AG04449 (cell line): ENCODE measurements at regions of chr12 and their contacts with region 1.

Region 1: GRCh38 chr12:92827836-92828431 is 101.2 kb downstream of the EEA1 start:
- DNase-seq: no peak
- H3K4me3 ChIP-seq: no peak overlapping the region
- CTCF ChIP-seq: peak; percentile 59

Region 2: DNA sequence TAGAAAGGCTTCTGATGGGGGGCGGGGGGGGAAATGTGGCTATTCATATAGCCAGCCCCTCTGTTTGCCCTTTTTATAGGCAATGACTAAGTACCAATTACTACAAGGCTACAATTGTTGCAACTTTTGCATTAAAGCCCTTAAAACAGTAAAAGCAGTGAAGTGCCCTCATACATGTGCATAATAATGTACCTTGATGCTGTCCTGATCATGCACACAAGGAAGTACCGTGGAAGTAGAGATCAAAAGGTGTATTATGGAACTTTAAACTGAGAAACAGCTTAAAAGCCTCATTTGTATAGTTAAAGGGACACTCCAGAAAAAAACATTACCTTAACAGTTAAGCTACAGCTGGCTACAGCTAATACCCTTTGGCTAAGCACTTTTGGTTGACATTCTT is 13.3 kb before region 1 on chr12:
- CTCF ChIA-PET with region 1: interaction called, 15 read pairs
- POLR2A ChIA-PET with region 1: no interaction called
- DNase-seq: no peak
- H3K4me3 ChIP-seq: no peak overlapping the region
- CTCF ChIP-seq: no peak

Region 3: DNA sequence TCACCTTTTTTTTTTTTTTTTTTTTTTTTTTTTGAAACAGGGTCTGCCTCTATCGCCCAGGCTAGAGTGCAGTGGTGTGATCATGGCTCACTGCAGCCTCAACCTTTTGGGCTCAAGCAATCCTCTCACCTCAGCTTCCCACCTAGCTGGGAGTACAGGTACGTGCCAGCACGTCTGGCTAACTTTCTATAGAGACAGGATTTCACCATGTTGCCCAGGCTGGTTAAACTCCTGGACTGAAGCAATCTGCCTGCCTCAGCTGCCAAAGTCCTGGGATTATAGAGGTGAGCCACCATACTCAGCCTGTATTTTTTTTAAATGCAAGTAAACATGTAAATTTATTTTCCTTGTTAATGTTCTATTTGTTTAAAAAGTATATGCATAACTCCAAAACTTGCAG is 20.8 kb after region 1 on chr12:
- CTCF ChIA-PET with region 1: no interaction called
- POLR2A ChIA-PET with region 1: no interaction called
- DNase-seq: no peak
- H3K4me3 ChIP-seq: no peak overlapping the region
- CTCF ChIP-seq: no peak

Region 4: GRCh38 chr12:92928421-92928961 is 100.6 kb after region 1 on chr12:
- CTCF ChIA-PET with region 1: interaction called, 10 read pairs
- POLR2A ChIA-PET with region 1: no interaction called
- DNase-seq: no peak
- H3K4me3 ChIP-seq: peak overlapping the region; percentile 79
- CTCF ChIP-seq: no peak